Endothelial cell of umbilical vein (primary cell): ENCODE measurements at regions of chr2 and their contacts with region 1.

Region 1: GRCh38 chr2:169285531-169286235 is 76.7 kb downstream of the LRP2 start:
- DNase-seq: no peak
- H3K4me3 ChIP-seq: no peak overlapping the region
- H3K27ac ChIP-seq: no peak overlapping the region
- H3K4me1 ChIP-seq: no peaks in the 10 kb centered on the region
- H3K27me3 ChIP-seq: peaks cover 0 to 3% of the 10 kb centered on the region in 2 experiments
- CTCF ChIP-seq: no peak
- POLR2A ChIP-seq: no peak

Region 2: GRCh38 chr2:169493360-169493759 is 207.7 kb after region 1 on chr2:
- CTCF ChIA-PET with region 1: no interaction called
- POLR2A ChIA-PET with region 1: no interaction called
- dilution Hi-C with region 1: no loop called
- intact Hi-C with region 1: no loop called
- DNase-seq: no peak
- H3K4me3 ChIP-seq: no peak overlapping the region
- H3K27ac ChIP-seq: no peak overlapping the region
- H3K4me1 ChIP-seq: no peaks in the 10 kb centered on the region
- H3K27me3 ChIP-seq: no peaks in the 10 kb centered on the region
- CTCF ChIP-seq: no peak
- POLR2A ChIP-seq: no peak

Region 3: GRCh38 chr2:170845343-170845742 is 1559.7 kb after region 1 on chr2:
- CTCF ChIA-PET with region 1: no interaction called
- POLR2A ChIA-PET with region 1: interaction called, 12 read pairs
- dilution Hi-C with region 1: no loop called
- intact Hi-C with region 1: no loop called
- DNase-seq: no peak
- H3K4me3 ChIP-seq: no peak overlapping the region
- H3K27ac ChIP-seq: no peak overlapping the region
- H3K4me1 ChIP-seq: peaks cover 8% of the 10 kb centered on the region
- H3K27me3 ChIP-seq: peaks cover 0 to 4% of the 10 kb centered on the region in 2 experiments
- CTCF ChIP-seq: peak in 1 of 2 donors; percentile 6
- POLR2A ChIP-seq: no peak